Activated CD4-positive, alpha-beta T cell treated with anti-CD3 and anti-CD28 coated beads, Interleukin-2, amount 10 ng/mL, durations not matched to agents 24 days and 14 days (primary cell): ENCODE measurements at regions of chr11 and their contacts with region 1.

Region 1: DNA sequence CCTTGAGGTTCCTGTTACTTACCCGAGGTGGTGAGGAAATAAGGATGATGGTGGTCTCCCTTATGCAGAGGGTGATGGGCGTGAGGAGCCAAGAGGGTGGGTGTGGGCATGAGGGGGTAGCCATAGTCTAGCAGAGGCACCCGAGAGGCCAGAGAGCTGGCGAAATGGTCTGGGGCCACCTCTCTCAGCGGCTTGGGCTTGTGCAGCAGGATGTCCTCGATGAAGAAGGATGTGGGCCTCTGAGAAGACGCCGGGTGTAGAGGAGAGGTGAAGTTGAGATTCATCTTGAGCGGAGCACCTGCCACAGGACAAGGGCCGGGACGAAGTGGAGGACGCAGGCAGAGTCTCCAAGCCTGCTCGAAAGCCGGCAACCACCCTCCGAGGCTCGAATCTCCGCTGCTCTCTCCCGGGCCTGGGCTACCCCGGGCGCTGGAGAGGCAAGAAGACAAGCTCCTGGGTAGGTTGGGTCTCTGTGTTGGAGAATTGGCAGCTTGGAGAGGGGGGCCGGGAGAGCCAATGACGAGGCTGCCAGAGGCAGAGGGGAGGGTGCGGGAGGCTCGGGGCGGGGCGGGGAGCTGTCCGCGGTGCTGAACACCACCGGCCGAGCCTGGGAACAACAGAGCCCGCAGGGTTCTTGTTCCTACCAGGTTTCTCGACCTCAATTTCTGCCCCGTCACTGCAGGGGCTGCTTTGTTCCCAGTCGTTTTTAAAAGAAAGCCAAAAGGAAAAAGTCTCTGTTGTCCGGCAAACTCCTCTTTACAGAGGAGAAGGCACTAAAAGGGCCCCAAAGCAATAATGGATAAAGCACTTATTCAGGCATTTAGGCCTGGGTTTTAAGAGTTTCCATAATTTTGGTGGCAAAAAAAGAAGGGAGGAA is at the start of gene BSX:
- DNase-seq: peak; percentile 87
- H3K4me3 Mint-ChIP-seq: no peak within 1 kb of the TSS
- H3K27ac Mint-ChIP-seq: no peak within 1 kb of the TSS
- H3K4me1 Mint-ChIP-seq: peaks cover 25% of the 10 kb centered on the region
- H3K27me3 Mint-ChIP-seq: peaks cover 87% of the 10 kb centered on the region
- total RNA-seq, gene BSX: not detected in 2 replicates

Region 2: DNA sequence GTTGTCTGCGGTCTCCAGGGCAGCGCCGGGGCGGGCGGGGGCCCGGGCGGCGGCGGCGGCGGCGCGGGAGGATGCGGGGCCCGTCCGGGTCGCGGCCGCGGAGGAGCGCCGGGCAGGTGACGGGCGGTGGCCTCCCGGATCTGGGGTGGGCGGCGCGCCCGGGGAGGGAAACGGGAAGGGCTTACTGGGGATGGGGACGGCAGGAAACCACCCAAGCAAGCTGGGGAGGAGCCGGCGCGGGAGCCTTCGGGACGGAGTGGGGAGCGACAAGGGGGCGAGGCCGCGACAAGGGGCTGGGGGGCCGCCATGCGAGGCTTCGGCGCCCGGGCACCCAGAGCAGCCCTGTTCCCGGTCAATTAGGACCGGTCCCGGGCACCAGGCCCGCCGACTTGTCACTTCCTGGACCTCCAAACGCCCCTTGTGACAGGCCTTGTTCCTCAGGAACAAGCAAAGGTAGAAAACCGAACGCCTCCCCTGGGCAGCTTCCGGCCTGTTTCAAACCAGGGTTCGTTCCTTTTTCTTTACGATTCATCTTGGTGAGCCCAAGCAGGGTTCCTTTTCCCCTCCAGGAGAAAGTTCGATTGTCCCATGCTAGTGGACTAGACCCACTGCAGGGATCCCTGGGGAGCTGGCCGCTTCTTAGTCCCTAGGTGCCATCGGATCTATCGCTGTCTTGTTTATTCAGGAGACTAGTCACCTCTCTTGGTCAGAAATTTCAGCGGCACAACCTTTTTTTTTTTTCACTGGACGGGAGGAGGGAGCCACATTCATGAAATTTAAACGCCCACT is 98.6 kb before region 1 on chr11:
- intact Hi-C with region 1: loop called (anchors 5 kb)
- DNase-seq: peak; percentile 86
- H3K4me3 Mint-ChIP-seq: peak overlapping the region; percentile 85
- H3K27ac Mint-ChIP-seq: peak overlapping the region; percentile 75
- H3K4me1 Mint-ChIP-seq: peaks cover 19% of the 10 kb centered on the region
- H3K27me3 Mint-ChIP-seq: peaks cover 15% of the 10 kb centered on the region

Region 3: GRCh38 chr11:123020968-123021367 is 39.3 kb after region 1 on chr11:
- intact Hi-C with region 1: no loop called
- DNase-seq: peak; percentile 76
- H3K4me3 Mint-ChIP-seq: no peak overlapping the region
- H3K27ac Mint-ChIP-seq: no peak overlapping the region
- H3K4me1 Mint-ChIP-seq: peaks cover 6% of the 10 kb centered on the region
- H3K27me3 Mint-ChIP-seq: peaks cover 23% of the 10 kb centered on the region

Region 4: GRCh38 chr11:123054301-123055065 is 72.9 kb after region 1 on chr11:
- intact Hi-C with region 1: loop called (anchors 2 kb)
- DNase-seq: peak; percentile 81
- H3K4me3 Mint-ChIP-seq: no peak overlapping the region
- H3K27ac Mint-ChIP-seq: peak overlapping the region; percentile 56
- H3K4me1 Mint-ChIP-seq: peaks cover 48% of the 10 kb centered on the region
- H3K27me3 Mint-ChIP-seq: no peaks in the 10 kb centered on the region

Region 5: GRCh38 chr11:123654566-123655081 is 673.0 kb after region 1 on chr11 and contains the start of gene SCN3B:
- intact Hi-C with region 1: loop called (anchors 10 kb)
- DNase-seq: peak; percentile 72
- H3K4me3 Mint-ChIP-seq: peak within 1 kb of the TSS; percentile 71
- H3K27ac Mint-ChIP-seq: no peak within 1 kb of the TSS
- H3K4me1 Mint-ChIP-seq: peaks cover 1% of the 10 kb centered on the region
- H3K27me3 Mint-ChIP-seq: peaks cover 51% of the 10 kb centered on the region
- total RNA-seq, gene SCN3B: not detected in 2 replicates